ENCODE measurements at regions of chr20 and their contacts with region 1.

Region 1: DNA sequence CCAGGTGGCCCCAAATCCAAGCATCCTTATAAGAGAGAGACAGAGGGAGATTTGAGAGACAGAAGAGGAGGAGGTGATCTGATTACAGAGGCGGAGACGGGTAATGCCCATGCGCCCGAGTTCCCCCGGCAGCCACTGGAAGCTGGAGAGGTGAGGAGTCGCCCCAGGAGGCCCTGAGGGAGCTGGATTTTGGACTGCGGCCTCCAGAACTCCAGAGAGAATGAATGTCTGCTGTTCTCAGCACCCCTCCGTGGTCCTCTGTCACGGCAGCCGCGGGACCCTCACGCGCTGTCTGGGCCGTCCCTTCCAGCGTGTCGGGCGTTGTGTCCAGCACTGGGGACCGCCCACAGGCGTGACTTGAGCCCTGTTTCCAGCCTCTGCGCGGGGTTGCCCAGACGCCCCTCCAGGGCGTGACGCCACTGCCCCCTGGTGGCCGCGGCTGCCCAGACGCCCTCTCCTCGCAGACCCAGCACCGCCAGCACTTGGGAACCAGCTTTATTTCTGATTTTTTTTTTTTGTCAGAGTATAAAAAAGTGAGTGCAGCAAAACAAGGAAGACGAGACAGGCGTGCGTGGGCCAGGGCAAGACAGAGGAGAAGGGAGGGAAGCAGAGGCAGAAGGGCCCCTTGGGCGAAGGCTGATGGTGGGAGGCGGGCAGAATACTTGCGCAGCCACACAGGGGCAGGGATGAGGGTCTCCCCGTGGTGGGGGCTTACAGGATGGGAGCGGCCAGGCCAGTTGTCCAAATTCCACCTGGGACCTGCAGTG is 4.1 kb upstream of the ZNF512B start:
- DNase-seq: peak; percentile 77
- H3K4me3 ChIP-seq: peak overlapping the region; percentile 10
- H3K27ac ChIP-seq: no peak overlapping the region
- H3K4me1 ChIP-seq: peaks cover 15% of the 10 kb centered on the region
- H3K27me3 ChIP-seq: no peaks in the 10 kb centered on the region
- CTCF ChIP-seq: peak; percentile 99

Region 2: GRCh38 chr20:63775096-63775978 is 198.5 kb before region 1 on chr20:
- CTCF ChIA-PET with region 1: interaction called, 6 read pairs
- POLR2A ChIA-PET with region 1: no interaction called
- intact Hi-C with region 1: loop called (anchors 10 kb)
- DNase-seq: peak; percentile 77
- H3K4me3 ChIP-seq: peak overlapping the region; percentile 35
- H3K27ac ChIP-seq: no peak overlapping the region
- H3K4me1 ChIP-seq: no peaks in the 10 kb centered on the region
- H3K27me3 ChIP-seq: no peaks in the 10 kb centered on the region
- CTCF ChIP-seq: peak; percentile 92

Region 3: GRCh38 chr20:64049060-64049877 is 75.5 kb after region 1 on chr20 and contains the start of gene SOX18:
- CTCF ChIA-PET with region 1: no interaction called
- POLR2A ChIA-PET with region 1: no interaction called
- intact Hi-C with region 1: no loop called
- DNase-seq: peak; percentile 62
- H3K4me3 ChIP-seq: peak within 1 kb of the TSS; percentile 34
- H3K27ac ChIP-seq: no peak within 1 kb of the TSS
- H3K4me1 ChIP-seq: peaks cover 17% of the 10 kb centered on the region
- H3K27me3 ChIP-seq: peaks cover 9% of the 10 kb centered on the region
- CTCF ChIP-seq: no peak
- total RNA-seq, gene SOX18: 0.30 and 0.70 TPM in 2 replicates

Measured in A673 (cell line).